HepG2 (cell line): ENCODE measurements at regions of chr20 and their contacts with region 1.

Region 1: DNA sequence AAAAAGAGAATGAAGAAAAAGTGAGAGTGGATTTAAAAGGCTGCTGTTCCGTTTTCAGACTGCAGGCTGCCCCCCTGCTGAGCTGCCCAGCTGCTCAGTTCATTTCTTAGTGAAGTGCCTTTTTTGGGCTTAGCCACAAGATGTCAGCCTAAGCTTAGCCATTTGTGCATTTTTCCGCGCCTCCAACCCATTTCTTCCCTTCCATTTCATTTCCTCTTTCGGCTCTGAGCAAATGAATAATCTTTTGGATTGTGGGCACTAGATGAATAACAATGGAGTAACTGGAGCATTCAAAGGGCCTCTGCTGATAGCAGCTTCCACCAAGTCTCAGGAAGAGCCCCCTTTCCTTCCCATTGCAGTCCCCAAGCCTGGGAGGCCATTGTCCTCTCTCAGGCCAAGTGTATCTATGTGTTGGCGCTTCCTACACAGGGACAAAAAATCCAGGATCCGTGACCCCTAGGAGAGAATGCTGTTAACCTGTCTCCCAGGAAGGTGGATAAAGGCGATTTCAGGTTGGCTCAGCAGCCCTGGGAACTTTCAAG is 83.5 kb upstream of the SPTLC3 start:
- DNase-seq: peak; percentile 89
- ATAC-seq: peak; percentile 84
- H3K4me3 ChIP-seq: peak overlapping the region; percentile 56 to 79 (median 73)
- H3K27ac ChIP-seq: peak overlapping the region; percentile 6
- H3K4me1 ChIP-seq: peaks cover 68% of the 10 kb centered on the region
- H3K27me3 ChIP-seq: peaks cover 0 to 5% of the 10 kb centered on the region in 2 experiments; a peak in 1 of 5 replicates
- CTCF ChIP-seq: peak; percentile 99
- EP300 ChIP-seq: 0 out of 4 replicates have a peak, but pooled peaks of 1 of the 2 experiments have one; percentile 24
- POLR2A ChIP-seq: no peak
- RAD21 ChIP-seq: peak; percentile 99

Region 2: GRCh38 chr20:12902992-12903391 is 22.3 kb before region 1 on chr20:
- CTCF ChIA-PET with region 1: no interaction called
- POLR2A ChIA-PET with region 1: no interaction called
- in situ Hi-C with region 1: no loop called
- intact Hi-C with region 1: loop called (anchors 1 kb)
- DNase-seq: no peak
- ATAC-seq: no peak
- H3K4me3 ChIP-seq: no peak overlapping the region
- H3K27ac ChIP-seq: no peak overlapping the region
- H3K4me1 ChIP-seq: no peaks in the 10 kb centered on the region
- H3K27me3 ChIP-seq: peaks cover 0 to 18% of the 10 kb centered on the region in 2 experiments; a peak in 2 of 5 replicates
- CTCF ChIP-seq: no peak
- EP300 ChIP-seq: no peak
- POLR2A ChIP-seq: no peak
- RAD21 ChIP-seq: no peak

Region 3: GRCh38 chr20:13082374-13082773 is 157.1 kb after region 1 on chr20:
- CTCF ChIA-PET with region 1: no interaction called
- POLR2A ChIA-PET with region 1: no interaction called
- in situ Hi-C with region 1: no loop called
- intact Hi-C with region 1: no loop called
- DNase-seq: no peak
- ATAC-seq: no peak
- H3K4me3 ChIP-seq: no peak overlapping the region
- H3K27ac ChIP-seq: no peak overlapping the region
- H3K4me1 ChIP-seq: peaks cover 36% of the 10 kb centered on the region
- H3K27me3 ChIP-seq: no peaks in the 10 kb centered on the region
- CTCF ChIP-seq: no peak
- EP300 ChIP-seq: no peak
- POLR2A ChIP-seq: no peak
- RAD21 ChIP-seq: no peak

Region 4: GRCh38 chr20:13105864-13106457 is 180.7 kb after region 1 on chr20:
- CTCF ChIA-PET with region 1: interaction called, 39 read pairs
- POLR2A ChIA-PET with region 1: no interaction called
- in situ Hi-C with region 1: no loop called
- intact Hi-C with region 1: loop called (anchors 1 kb)
- DNase-seq: peak; percentile 62
- ATAC-seq: no peak
- H3K4me3 ChIP-seq: no peak overlapping the region
- H3K27ac ChIP-seq: peak overlapping the region; percentile 28
- H3K4me1 ChIP-seq: peaks cover 36% of the 10 kb centered on the region
- H3K27me3 ChIP-seq: no peaks in the 10 kb centered on the region
- CTCF ChIP-seq: peak; percentile 79
- EP300 ChIP-seq: no peak
- POLR2A ChIP-seq: no peak
- RAD21 ChIP-seq: peak; percentile 88

Region 5: GRCh38 chr20:13261460-13262301 is 336.4 kb after region 1 on chr20:
- CTCF ChIA-PET with region 1: interaction called, 4 read pairs
- POLR2A ChIA-PET with region 1: no interaction called
- in situ Hi-C with region 1: no loop called
- intact Hi-C with region 1: loop called (anchors 1 kb)
- DNase-seq: peak; percentile 86
- ATAC-seq: peak; percentile 99
- H3K4me3 ChIP-seq: no peak overlapping the region
- H3K27ac ChIP-seq: no peak overlapping the region
- H3K4me1 ChIP-seq: peaks cover 32% of the 10 kb centered on the region
- H3K27me3 ChIP-seq: no peaks in the 10 kb centered on the region
- CTCF ChIP-seq: peak; percentile 96
- EP300 ChIP-seq: 0 out of 4 replicates have a peak, but pooled peaks of 1 of the 2 experiments have one; percentile 39
- POLR2A ChIP-seq: no peak
- RAD21 ChIP-seq: peak; percentile 95

Region 6: DNA sequence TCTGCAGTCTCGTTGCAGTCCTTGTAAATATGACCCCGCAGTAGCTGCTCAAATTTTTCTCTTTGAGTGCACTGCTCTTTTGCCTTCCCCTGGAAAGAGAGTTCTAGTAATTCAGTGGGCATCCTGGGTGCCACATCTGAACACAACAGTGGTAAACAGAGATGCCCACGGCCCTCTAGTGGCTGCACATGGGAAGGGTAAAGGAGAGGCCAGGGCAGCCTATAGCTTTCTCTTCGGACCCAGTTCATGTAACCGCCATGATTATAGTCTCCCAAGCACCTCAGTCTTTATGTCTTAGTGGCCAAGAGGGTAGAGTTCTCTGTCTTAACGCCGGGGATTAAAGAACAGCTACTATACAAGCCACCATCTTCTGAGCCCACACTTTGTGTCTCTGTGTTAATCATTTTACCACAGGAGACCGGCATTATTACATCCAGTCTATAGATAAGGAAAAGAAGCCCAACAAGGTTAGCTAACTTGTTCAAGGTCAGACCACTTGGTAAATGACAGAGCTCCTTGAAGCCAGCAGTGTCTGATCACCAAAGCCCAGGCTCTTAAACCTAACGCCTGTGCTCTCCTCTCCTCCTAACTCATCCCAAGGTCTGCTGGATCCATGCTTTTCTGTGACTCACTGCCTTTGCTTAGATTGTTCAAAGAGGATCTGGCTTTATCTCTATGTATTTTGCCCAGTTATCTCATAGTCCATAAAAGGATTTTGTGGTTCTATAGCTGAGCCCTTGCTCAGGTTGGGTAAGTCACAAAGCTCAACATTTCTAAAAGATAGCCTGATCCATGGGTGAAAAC is 377.6 kb after region 1 on chr20:
- CTCF ChIA-PET with region 1: interaction called, 11 read pairs
- POLR2A ChIA-PET with region 1: no interaction called
- in situ Hi-C with region 1: no loop called
- intact Hi-C with region 1: loop called (anchors 1 kb)
- DNase-seq: peak; percentile 49
- ATAC-seq: peak; percentile 97
- H3K4me3 ChIP-seq: no peak overlapping the region
- H3K27ac ChIP-seq: no peak overlapping the region
- H3K4me1 ChIP-seq: peaks cover 22% of the 10 kb centered on the region
- H3K27me3 ChIP-seq: no peaks in the 10 kb centered on the region
- CTCF ChIP-seq: peak; percentile 82
- EP300 ChIP-seq: no peak
- POLR2A ChIP-seq: no peak
- RAD21 ChIP-seq: peak; percentile 79

Region 7: GRCh38 chr20:13771853-13772453 is 846.7 kb after region 1 on chr20:
- CTCF ChIA-PET with region 1: interaction called, 5 read pairs
- POLR2A ChIA-PET with region 1: no interaction called
- in situ Hi-C with region 1: no loop called
- intact Hi-C with region 1: loop called (anchors 1 kb)
- DNase-seq: peak; percentile 28
- ATAC-seq: peak; percentile 46; the same call in 1 of the 3 replicates
- H3K4me3 ChIP-seq: no peak overlapping the region
- H3K27ac ChIP-seq: no peak overlapping the region
- H3K4me1 ChIP-seq: no peaks in the 10 kb centered on the region
- H3K27me3 ChIP-seq: no peaks in the 10 kb centered on the region
- CTCF ChIP-seq: peak; percentile 41
- EP300 ChIP-seq: no peak
- POLR2A ChIP-seq: no peak
- RAD21 ChIP-seq: no peak

Region 8: GRCh38 chr20:13784893-13785715 is 859.8 kb after region 1 on chr20 and contains the starts of genes ESF1 and NDUFAF5:
- CTCF ChIA-PET with region 1: no interaction called
- POLR2A ChIA-PET with region 1: no interaction called
- in situ Hi-C with region 1: loop called (anchors 10 kb)
- intact Hi-C with region 1: loop called (anchors 5 kb)
- DNase-seq: peak; percentile 99
- ATAC-seq: peak; percentile 95
- H3K4me3 ChIP-seq: peak within 1 kb of the TSS; percentile 84 to 90 (median 86)
- H3K27ac ChIP-seq: peak within 1 kb of the TSS; percentile 93
- H3K4me1 ChIP-seq: peaks cover 66% of the 10 kb centered on the region
- H3K27me3 ChIP-seq: no peaks in the 10 kb centered on the region; a peak in 1 of 5 replicates
- CTCF ChIP-seq: peak; percentile 42
- EP300 ChIP-seq: peak; percentile 69 to 76; a peak in 2 of 4 replicates
- POLR2A ChIP-seq: peak; percentile 40 to 87; a peak in 3 of 4 replicates
- RAD21 ChIP-seq: peak; percentile 24
- total RNA-seq, gene ESF1: 66.9 and 95.1 TPM in 2 replicates
- total RNA-seq, gene NDUFAF5: 66.7 and 86.0 TPM in 2 replicates